Calu3 (cell line): ENCODE measurements at regions of chr16 and their contacts with region 1.

Region 1: GRCh38 chr16:3029537-3030402 is 5.9 kb downstream of the THOC6 start:
- DNase-seq: no peak
- H3K4me3 Mint-ChIP-seq: no peak overlapping the region
- H3K27ac Mint-ChIP-seq: peak overlapping the region; percentile 21
- H3K4me1 Mint-ChIP-seq: no peaks in the 10 kb centered on the region
- H3K27me3 Mint-ChIP-seq: no peaks in the 10 kb centered on the region
- CTCF ChIP-seq: no peak

Region 2: GRCh38 chr16:3009565-3010390 is 20.0 kb before region 1 on chr16:
- CTCF ChIA-PET with region 1: interaction called, 126 read pairs
- intact Hi-C with region 1: no loop called
- DNase-seq: peak; percentile 98
- H3K4me3 Mint-ChIP-seq: peak overlapping the region; percentile 48
- H3K27ac Mint-ChIP-seq: peak overlapping the region; percentile 89
- H3K4me1 Mint-ChIP-seq: peaks cover 62% of the 10 kb centered on the region
- H3K27me3 Mint-ChIP-seq: no peaks in the 10 kb centered on the region
- CTCF ChIP-seq: no peak

Region 3: DNA sequence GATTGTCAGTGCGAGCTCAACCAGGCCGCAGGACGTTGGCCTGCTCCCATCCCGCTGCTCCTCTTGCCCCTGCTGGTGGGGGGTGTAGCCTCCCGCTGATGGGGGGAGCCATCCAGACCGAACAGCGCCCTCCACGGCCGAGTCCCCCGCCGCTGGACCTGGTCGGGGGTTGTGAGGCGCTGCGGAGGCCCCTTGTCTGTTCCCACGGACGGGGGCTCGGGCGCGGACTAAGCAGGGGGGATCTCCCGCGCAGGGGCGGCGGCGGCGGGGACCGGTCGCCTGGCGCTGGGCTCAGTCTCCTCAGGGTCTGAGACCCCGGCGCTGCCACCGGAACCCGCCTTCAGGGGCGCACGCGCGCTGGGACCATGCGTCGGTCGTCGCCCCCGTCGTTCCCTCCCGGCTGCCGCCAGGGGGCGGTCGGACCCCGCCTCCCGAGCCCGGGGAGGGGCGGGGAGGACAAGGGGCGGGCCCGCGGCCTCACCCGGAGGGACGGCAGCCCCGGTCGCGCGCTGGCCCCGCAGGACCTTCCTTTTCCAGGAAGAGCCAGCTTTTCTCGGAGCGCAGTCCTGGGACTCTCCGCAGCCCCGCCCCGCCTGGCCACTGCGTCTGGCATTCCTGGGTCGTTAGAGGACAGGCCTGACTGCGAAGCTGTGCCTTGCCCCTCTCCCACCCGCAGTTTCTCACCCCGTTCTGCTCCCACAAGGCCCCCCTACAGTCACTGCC is 29.4 kb after region 1 on chr16:
- CTCF ChIA-PET with region 1: interaction called, 23 read pairs
- intact Hi-C with region 1: no loop called
- DNase-seq: peak; percentile 97
- H3K4me3 Mint-ChIP-seq: peak overlapping the region; percentile 96
- H3K27ac Mint-ChIP-seq: peak overlapping the region; percentile 55
- H3K4me1 Mint-ChIP-seq: peaks cover 2% of the 10 kb centered on the region
- H3K27me3 Mint-ChIP-seq: no peaks in the 10 kb centered on the region
- CTCF ChIP-seq: peak; percentile 97

Region 4: GRCh38 chr16:3098459-3099394 is 69.0 kb after region 1 on chr16 and contains the start of gene ZSCAN10:
- CTCF ChIA-PET with region 1: interaction called, 10 read pairs
- intact Hi-C with region 1: no loop called
- DNase-seq: no peak
- H3K4me3 Mint-ChIP-seq: peak within 1 kb of the TSS; percentile 70
- H3K27ac Mint-ChIP-seq: peak within 1 kb of the TSS; percentile 53
- H3K4me1 Mint-ChIP-seq: peaks cover 30% of the 10 kb centered on the region
- H3K27me3 Mint-ChIP-seq: peaks cover 30% of the 10 kb centered on the region
- CTCF ChIP-seq: no peak
- total RNA-seq, gene ZSCAN10: not detected in 2 replicates